ENCODE measurements at regions of chr3 and their contacts with region 1.

Region 1: GRCh38 chr3:13648060-13649001 is 99.4 kb downstream of the FBLN2 start:
- DNase-seq: peak; percentile 74 to 91 (median 83)
- ATAC-seq: peak; percentile 47 to 91 (median 79)
- H3K4me3 ChIP-seq: peak overlapping the region in 1 of 12 donors; percentile 10
- H3K27ac ChIP-seq: no peak overlapping the region
- H3K4me1 ChIP-seq: peaks cover 0 to 23% (median 5%) of the 10 kb centered on the region in 12 donors
- H3K27me3 ChIP-seq: peaks cover 0 to 28% (median 3%) of the 10 kb centered on the region in 9 donors
- CTCF ChIP-seq: peak; percentile 94 to 99 (median 98)
- POLR2A ChIP-seq: no peak

Region 2: DNA sequence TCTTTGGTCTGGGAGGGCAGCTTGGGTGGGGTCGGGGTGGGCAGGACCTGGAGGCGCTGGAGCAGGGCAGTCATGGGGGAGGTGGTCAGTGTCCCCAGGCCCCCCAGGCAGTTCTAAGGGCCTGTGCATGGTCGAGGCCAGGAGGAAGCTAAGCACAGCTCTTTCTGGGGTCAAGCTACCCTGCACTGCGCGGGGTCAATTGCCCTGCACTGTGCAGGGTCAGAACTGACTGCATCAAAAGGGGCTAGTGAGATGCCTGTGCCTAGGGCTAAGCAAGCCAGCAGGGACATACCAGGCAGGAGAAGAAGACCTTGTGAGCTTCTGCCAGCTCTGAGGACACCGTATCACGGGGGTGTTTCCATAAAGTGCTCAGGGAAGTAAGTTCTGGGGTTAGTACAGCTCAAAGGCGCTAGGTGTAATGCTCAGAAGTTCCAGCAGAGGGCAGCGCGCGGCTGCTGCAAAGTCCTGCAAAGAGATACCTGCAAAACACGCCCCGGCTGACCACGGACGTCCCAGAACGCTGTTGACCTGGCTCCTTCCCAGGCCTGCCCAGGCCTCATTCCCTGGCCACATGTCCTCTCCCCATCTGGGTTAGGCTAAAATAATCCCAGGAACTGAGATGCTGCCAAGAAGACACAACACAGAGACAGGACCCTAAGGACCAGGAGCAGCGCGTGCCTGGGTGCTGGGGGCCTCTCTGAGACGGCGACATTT is 556.3 kb before region 1 on chr3:
- intact Hi-C with region 1: loop called (anchors 1 to 5 kb)
- DNase-seq: peak; percentile 84 to 90 (median 87)
- ATAC-seq: peak; percentile 79 to 83 (median 81)
- H3K4me3 ChIP-seq: peak overlapping the region in 6 of 12 donors; percentile 22 to 34 (median 24)
- H3K27ac ChIP-seq: peak overlapping the region in 8 of 12 donors; percentile 28 to 78 (median 60)
- H3K4me1 ChIP-seq: peaks cover 0 to 24% (median 10%) of the 10 kb centered on the region in 12 donors
- H3K27me3 ChIP-seq: no peaks in the 10 kb centered on the region
- CTCF ChIP-seq: peak; percentile 93 to 99 (median 97)
- POLR2A ChIP-seq: no peak

Region 3: GRCh38 chr3:13495921-13496723 is 152.2 kb before region 1 on chr3:
- intact Hi-C with region 1: loop called (anchors 1 to 2 kb)
- DNase-seq: peak; percentile 70 to 80 (median 73)
- ATAC-seq: peak; percentile 72 to 95 (median 90)
- H3K4me3 ChIP-seq: no peak overlapping the region
- H3K27ac ChIP-seq: peak overlapping the region in 1 of 12 donors; percentile 3
- H3K4me1 ChIP-seq: peaks cover 0 to 14% (median 9%) of the 10 kb centered on the region in 12 donors
- H3K27me3 ChIP-seq: no peaks in the 10 kb centered on the region
- CTCF ChIP-seq: peak; percentile 83 to 98 (median 94)
- POLR2A ChIP-seq: no peak

Region 4: GRCh38 chr3:13564751-13565560 is 83.4 kb before region 1 on chr3:
- intact Hi-C with region 1: loop called in 3 of 10 experiments (anchors 5 to 10 kb)
- DNase-seq: peak in 3 of 5 donors; percentile 67 to 77 (median 67)
- ATAC-seq: peak; percentile 79 to 86 (median 84)
- H3K4me3 ChIP-seq: no peak overlapping the region
- H3K27ac ChIP-seq: peak overlapping the region in 1 of 12 donors; percentile 37
- H3K4me1 ChIP-seq: peaks cover 7 to 74% (median 36%) of the 10 kb centered on the region in 12 donors
- H3K27me3 ChIP-seq: no peaks in the 10 kb centered on the region
- CTCF ChIP-seq: peak in 1 of 12 donors; percentile 12
- POLR2A ChIP-seq: no peak

Region 5: DNA sequence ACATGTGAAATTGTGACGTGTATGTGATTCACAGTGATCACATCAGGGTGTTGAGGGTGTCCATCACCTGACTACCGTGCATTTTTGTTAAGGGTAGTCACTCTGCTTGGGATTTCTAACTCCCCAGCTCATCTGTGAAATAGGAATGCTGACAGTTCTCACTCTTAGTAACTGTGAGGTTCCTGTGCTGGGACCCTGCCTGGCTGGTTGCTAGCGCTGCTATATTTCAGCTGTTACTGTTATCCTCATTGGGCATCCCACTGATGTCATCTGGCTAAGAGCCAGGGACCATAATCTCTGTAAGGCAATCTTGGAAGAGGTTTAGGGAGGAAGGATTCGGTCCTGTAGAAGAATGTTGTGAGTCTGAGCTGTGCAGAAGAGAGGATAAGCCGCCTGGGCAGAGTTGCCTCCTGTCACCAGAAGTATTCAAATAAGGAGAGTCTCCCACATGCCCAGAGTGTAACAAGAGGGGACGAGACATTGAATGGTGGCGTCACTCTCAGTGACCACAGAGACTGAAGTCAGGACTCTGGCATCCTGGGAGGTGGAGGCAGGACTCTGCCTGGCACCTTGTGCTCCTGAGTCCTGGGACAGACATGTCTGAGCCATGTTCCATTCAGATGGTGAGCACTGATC is 47.3 kb before region 1 on chr3:
- intact Hi-C with region 1: no loop called
- DNase-seq: peak in 1 of 5 donors; percentile 24
- ATAC-seq: peak in 3 of 4 donors; percentile 21 to 43 (median 28)
- H3K4me3 ChIP-seq: no peak overlapping the region
- H3K27ac ChIP-seq: no peak overlapping the region
- H3K4me1 ChIP-seq: peaks cover 0 to 17% (median 6%) of the 10 kb centered on the region in 12 donors
- H3K27me3 ChIP-seq: peaks cover 0 to 8% (median 0%) of the 10 kb centered on the region in 9 donors
- CTCF ChIP-seq: no peak
- POLR2A ChIP-seq: no peak

Region 6: DNA sequence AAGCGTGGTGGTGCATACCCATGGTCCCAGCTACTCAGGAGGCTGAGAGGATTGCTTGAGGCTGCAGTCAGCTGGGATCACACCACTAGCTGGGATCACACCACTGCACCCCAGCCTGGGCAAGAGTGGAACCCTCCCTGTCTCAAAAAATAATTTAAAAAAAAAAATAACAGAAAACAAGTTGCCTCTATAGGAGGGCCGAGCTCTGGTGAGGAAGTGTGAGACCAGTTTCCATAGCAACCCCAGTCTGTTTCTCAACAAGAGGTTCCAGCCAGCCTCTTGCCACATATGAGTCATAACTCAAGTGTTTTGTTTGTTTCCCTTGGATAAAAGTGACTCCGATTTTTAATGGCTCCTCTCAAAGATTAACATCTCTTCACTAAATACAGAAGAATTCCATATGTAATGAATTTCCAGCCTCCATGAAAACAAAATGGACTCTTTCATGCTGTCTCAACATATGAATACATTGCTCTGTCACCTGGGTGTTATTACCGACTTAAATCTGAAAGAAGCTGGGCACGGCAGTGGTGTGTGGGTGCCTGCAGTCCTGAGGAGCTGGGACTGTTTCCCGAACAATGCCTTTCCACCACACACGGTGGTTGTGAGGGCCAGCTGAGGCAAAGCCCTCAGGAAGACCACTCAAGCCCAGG is 496.2 kb after region 1 on chr3:
- intact Hi-C with region 1: loop called in 1 of 10 experiments (anchors 10 kb)
- DNase-seq: peak in 4 of 5 donors; percentile 61 to 80 (median 74)
- ATAC-seq: peak; percentile 65 to 89 (median 80)
- H3K4me3 ChIP-seq: peak overlapping the region in 8 of 12 donors; percentile 10 to 40 (median 32)
- H3K27ac ChIP-seq: peak overlapping the region; percentile 34 to 91 (median 81)
- H3K4me1 ChIP-seq: peaks cover 0 to 74% (median 36%) of the 10 kb centered on the region in 12 donors
- H3K27me3 ChIP-seq: no peaks in the 10 kb centered on the region
- CTCF ChIP-seq: no peak
- POLR2A ChIP-seq: no peak

Region 7: DNA sequence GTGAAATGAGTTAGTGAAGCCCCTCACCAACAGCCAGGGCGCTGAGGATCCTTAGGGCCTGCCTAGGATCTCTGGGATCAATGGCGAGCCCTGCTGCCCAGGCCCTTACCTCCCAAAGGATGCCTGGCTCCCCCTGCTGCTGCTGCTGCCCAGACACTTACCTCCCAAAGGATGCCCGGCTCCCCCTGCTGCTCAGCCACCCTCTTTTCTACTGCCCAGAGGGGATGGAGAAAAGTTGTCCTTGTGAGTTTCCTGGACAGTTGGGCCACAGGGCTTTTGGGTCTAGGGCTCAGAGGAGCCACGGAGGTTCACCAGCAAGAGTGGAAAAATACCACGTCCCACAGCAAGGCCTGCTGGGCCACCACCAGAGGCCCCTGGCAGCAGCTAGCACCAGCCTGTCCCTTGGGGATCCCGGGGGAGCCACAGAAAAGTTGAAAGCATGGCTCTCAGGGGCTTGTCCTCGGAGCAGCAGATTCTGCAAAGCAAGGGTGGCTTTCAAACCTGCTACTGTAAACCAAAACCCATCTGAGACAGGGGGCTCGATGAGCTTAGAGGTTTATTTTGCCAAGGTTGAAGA is 813.5 kb after region 1 on chr3:
- intact Hi-C with region 1: loop called in 1 of 10 experiments (anchors 10 kb)
- DNase-seq: peak; percentile 48 to 74 (median 60)
- ATAC-seq: peak in 3 of 4 donors; percentile 44 to 48 (median 45)
- H3K4me3 ChIP-seq: no peak overlapping the region
- H3K27ac ChIP-seq: peak overlapping the region in 3 of 12 donors; percentile 5 to 16 (median 14)
- H3K4me1 ChIP-seq: peaks cover 0 to 51% (median 19%) of the 10 kb centered on the region in 12 donors
- H3K27me3 ChIP-seq: peaks cover 0 to 8% (median 0%) of the 10 kb centered on the region in 9 donors
- CTCF ChIP-seq: peak; percentile 22 to 65 (median 50)
- POLR2A ChIP-seq: no peak